MCF 10A (cell line): ENCODE measurements at regions of chr17 and their contacts with region 1.

Region 1: DNA sequence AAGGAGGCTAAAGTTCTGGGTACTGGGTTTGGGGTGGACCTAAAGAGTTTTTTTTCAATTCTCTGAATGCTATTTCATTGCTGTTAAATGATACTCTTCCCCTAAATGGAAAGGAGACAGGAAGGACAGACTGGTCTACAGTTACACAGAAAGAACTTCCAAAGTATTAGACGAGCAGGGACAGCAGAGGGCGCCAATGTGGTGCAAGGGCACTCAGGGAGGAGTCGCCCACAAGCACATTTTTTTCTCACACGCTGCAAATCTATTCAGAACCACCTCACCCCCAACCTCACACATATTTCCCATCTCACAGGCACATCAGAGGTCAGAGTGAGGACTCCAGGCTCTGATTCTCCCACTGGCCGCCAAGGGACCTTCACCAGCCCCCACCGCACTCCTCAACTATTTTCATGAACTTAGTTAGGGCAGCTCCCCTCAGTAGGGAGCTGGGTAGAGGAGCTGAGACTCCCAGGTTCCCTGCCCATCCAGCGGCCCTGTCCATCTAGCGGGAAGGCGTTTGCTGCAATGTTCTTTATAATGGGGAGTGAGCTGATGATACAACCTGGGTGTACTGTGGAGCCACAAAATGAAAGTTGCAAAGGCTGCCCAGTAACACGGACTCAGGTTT is 6.8 kb upstream of the CA4 start:
- DNase-seq: peak; percentile 91
- H3K4me3 Mint-ChIP-seq: peak overlapping the region; percentile 71
- H3K27ac Mint-ChIP-seq: no peak overlapping the region
- H3K4me1 Mint-ChIP-seq: peaks cover 18% of the 10 kb centered on the region
- H3K27me3 Mint-ChIP-seq: peaks cover 31% of the 10 kb centered on the region
- CTCF ChIP-seq: peak; percentile 66

Region 2: DNA sequence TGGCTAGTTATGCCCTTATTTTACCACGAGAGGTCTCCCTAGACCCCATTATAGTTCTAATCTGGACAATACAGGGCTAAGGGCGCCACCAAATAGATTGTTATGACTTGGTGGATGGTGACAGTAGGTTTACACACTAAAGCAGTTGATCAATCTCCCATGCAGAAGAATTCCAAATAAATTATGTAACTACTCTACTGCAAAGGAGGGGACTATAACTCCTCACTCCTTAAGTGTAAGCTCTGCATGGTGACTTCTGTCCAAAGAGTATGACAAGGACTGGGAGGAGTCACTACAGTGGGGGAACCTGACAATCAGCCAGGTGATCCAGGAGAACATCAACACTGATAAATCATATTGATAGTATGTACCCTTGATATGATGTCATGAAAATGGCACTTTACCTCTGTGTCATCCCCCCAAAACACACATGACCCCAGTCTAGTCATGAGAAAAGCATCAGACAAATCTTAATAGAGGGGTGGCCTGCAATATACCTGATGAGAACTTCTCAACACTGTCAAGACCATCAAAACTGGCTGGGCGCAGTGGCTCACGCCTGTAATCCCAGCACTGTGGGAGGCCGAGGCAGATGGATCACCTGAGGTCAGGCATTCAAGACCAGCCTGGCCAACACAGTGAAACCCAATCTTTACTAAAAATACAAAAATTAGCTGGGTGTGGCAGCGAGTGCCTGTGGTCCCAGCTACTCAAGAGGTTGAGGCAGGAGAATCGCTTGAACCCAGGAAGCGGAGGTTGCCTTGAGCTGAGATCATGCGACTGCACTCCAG is 831.7 kb before region 1 on chr17:
- CTCF ChIA-PET with region 1: no interaction called
- POLR2A ChIA-PET with region 1: no interaction called
- intact Hi-C with region 1: no loop called
- DNase-seq: peak; percentile 75
- H3K4me3 Mint-ChIP-seq: no peak overlapping the region
- H3K27ac Mint-ChIP-seq: no peak overlapping the region
- H3K4me1 Mint-ChIP-seq: peaks cover 5% of the 10 kb centered on the region
- H3K27me3 Mint-ChIP-seq: no peaks in the 10 kb centered on the region
- CTCF ChIP-seq: peak; percentile 79

Region 3: DNA sequence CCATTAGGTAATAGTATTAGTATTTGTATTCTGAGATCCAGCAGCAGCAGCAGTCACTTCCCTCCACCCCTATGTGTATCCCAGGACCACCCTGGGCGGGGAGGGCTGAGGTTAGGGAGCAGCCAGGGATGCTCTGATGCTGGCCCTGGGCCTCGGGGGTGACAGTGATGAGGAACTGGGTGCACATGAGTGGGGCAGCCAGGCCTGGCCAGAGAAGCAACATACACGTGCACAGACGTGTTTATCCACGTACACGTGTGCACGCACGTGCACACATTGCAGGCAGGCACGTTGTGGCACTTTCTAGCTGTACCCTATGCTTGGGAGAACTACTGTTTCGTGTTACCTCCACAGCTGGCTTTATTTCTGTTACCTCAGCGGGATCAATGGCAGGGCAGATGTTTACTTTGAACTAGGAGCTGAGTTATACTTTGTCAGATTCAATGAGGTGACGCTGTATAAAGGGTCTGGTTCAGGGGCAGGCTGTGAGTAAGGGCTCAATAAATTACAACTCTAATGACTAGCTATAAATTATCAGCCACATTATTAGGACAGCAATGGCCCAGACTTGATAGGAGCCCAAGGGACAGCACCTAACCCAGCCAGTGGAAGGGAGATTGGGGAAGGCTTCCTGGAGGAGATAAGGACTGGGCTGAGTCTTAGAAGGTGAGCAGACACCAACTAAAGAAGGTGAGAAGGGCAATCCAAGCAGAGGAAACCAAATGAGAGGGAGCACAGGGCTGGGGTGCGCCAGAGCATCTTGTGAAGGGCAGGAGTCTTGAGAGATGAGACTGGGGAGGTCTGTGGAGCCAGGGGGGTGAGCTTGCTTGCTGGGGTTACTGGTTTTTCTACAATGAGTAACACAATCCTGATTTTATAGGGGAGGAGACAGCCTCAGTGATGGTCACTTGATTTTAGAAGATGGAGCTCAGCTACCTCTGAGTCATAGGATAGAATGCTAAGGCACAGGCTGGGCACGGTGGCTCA is 15.6 kb before region 1 on chr17:
- CTCF ChIA-PET with region 1: interaction called, 25 read pairs
- POLR2A ChIA-PET with region 1: interaction called, 3 read pairs
- intact Hi-C with region 1: no loop called
- DNase-seq: no peak
- H3K4me3 Mint-ChIP-seq: no peak overlapping the region
- H3K27ac Mint-ChIP-seq: no peak overlapping the region
- H3K4me1 Mint-ChIP-seq: no peaks in the 10 kb centered on the region
- H3K27me3 Mint-ChIP-seq: peaks cover 19% of the 10 kb centered on the region
- CTCF ChIP-seq: no peak

Region 4: GRCh38 chr17:60345227-60345626 is 202.2 kb after region 1 on chr17:
- CTCF ChIA-PET with region 1: no interaction called
- POLR2A ChIA-PET with region 1: no interaction called
- intact Hi-C with region 1: no loop called
- DNase-seq: no peak
- H3K4me3 Mint-ChIP-seq: no peak overlapping the region
- H3K27ac Mint-ChIP-seq: no peak overlapping the region
- H3K4me1 Mint-ChIP-seq: no peaks in the 10 kb centered on the region
- H3K27me3 Mint-ChIP-seq: no peaks in the 10 kb centered on the region
- CTCF ChIP-seq: no peak

Region 5: GRCh38 chr17:60435244-60436167 is 292.5 kb after region 1 on chr17:
- CTCF ChIA-PET with region 1: interaction called, 4 read pairs
- POLR2A ChIA-PET with region 1: no interaction called
- intact Hi-C with region 1: loop called (anchors 1 kb)
- DNase-seq: peak; percentile 93
- H3K4me3 Mint-ChIP-seq: no peak overlapping the region
- H3K27ac Mint-ChIP-seq: no peak overlapping the region
- H3K4me1 Mint-ChIP-seq: peaks cover 8% of the 10 kb centered on the region
- H3K27me3 Mint-ChIP-seq: no peaks in the 10 kb centered on the region
- CTCF ChIP-seq: peak; percentile 87